ENCODE measurements at regions of chr12 and their contacts with region 1.

Region 1: DNA sequence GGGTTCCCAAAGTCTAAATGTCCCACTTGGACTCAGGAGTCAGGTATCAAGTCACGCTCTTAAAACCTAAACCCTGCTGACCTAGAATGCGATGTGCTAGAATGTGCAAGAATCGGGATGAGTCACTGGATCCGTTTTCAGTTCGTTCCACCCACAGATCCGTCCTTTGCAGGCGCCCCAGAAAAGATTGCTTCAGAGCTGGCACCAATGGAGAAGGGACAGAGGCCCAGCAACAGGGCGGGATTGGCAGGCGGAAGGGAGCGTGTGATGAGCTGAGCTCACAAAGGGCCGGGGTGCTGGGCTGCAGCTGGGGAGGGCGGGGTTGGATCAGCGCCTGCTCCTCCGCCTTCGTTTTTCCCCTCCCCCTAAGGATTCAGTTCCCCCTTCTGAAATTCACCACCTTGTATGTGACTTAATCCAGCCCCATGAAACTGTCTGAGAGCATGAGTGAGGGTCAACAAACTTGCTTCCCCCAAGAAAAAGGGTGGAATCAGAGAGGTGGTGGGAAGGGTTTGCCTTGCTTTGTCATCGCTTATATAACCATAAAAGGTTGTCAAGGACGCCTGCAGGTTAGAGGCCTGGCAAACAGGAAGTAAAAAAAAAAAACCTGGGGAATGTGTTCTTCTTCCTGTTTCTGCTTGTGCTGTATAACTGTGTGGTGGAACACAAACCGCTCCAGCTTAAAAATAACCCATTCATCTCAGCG is 2.8 kb upstream of the UBC start:
- DNase-seq: peak; percentile 86 to 97
- H3K4me3 ChIP-seq: peak overlapping the region; percentile 19 to 99 (median 36); a peak in 6 of 8 replicates
- H3K27ac ChIP-seq: peak overlapping the region; percentile 92
- H3K4me1 ChIP-seq: peaks cover 8 to 34% (median 24%) of the 10 kb centered on the region in 4 experiments; a peak in 6 of 7 replicates
- H3K27me3 ChIP-seq: no peaks in the 10 kb centered on the region
- CTCF ChIP-seq: no peak
- EP300 ChIP-seq: peak in 1 of 2 experiments; percentile 90; a peak in 2 of 3 replicates
- POLR2A ChIP-seq: peak in 1 of 2 experiments; percentile 67; a peak in 2 of 3 replicates
- RAD21 ChIP-seq: peak in 1 of 2 experiments; percentile 10; a peak in 1 of 4 replicates

Region 2: GRCh38 chr12:124869034-124869665 is 48.1 kb before region 1 on chr12:
- CTCF ChIA-PET with region 1: no interaction called
- POLR2A ChIA-PET with region 1: interaction called, 10 read pairs
- DNase-seq: no peak
- H3K4me3 ChIP-seq: no peak overlapping the region
- H3K27ac ChIP-seq: 0 out of 2 replicates have a peak overlapping the region, but pooled peaks have one; percentile 7
- H3K4me1 ChIP-seq: peaks cover 0 to 8% (median 6%) of the 10 kb centered on the region in 4 experiments; a peak in 6 of 7 replicates
- H3K27me3 ChIP-seq: no peaks in the 10 kb centered on the region
- CTCF ChIP-seq: no peak
- EP300 ChIP-seq: no peak
- POLR2A ChIP-seq: no peak
- RAD21 ChIP-seq: no peak

Region 3: DNA sequence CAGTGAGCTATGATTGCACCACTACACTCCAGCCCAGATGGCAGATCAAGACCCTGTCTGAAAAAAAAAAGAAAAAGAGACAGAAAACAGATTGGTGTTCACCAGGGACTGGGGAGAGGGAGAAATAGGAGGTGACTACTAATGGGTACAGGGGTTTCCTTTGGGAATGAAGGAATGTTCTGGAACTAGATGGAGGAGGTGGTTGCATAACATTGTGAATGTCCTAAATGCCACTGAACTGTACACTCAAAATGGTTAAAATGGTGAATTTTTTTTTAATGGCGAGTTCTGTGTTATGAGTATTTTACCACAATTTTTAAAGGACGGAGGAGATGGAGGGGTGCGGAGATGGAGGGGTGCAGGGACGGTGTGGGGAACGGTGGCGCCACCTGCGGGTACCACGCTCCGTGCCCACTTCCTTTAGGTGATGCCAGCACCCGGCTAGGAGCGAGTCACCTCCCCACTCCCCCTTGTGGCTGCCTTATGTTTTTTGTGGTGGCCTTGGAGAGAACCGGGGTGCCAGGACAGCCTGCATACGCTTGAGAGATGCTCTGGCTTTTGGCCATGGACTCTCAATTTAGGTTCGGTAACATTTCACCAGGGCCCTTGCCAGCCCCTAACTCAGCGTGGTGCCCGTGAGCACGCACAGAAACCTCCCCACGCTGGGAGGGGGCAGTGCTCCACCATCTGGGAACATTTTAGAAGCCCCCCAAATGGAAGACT is 18.9 kb before region 1 on chr12:
- CTCF ChIA-PET with region 1: interaction called, 5 read pairs
- POLR2A ChIA-PET with region 1: interaction called, 34 read pairs
- DNase-seq: peak; percentile 53 to 87
- H3K4me3 ChIP-seq: no peak overlapping the region
- H3K27ac ChIP-seq: no peak overlapping the region
- H3K4me1 ChIP-seq: no peaks in the 10 kb centered on the region; a peak in 1 of 7 replicates
- H3K27me3 ChIP-seq: no peaks in the 10 kb centered on the region
- CTCF ChIP-seq: peak; percentile 95 to 99 (median 97)
- EP300 ChIP-seq: no peak
- POLR2A ChIP-seq: no peak
- RAD21 ChIP-seq: peak; percentile 81 to 84

Region 4: DNA sequence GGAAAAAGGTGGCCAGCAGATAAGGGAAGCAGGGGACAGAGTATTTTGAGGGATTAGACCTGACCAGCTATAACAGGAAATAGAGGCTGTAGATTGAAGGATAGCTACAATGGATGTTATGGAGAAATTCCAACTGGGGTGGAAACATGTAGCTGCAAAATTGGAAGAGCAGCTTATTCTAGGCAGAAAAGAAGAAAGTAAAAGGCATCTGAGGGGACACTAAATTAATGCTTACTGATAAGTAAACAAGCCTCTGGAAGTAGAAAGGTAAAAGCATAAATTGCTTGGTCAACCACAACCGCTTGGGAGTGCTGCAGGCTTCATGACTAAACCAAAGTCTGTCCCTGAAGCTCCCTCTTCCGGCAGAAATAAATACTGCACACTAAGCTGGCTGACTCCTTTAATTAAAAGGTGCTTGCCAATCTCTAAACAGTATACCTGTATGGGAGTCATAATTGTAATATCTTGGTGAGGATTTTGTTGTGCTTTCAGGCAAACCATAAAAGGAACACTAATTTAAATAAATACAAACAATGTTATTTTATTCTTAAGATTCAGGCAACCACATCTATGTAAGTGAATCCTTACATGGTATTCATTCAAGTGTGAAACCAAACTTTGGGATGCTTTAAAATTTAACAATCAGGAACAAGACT is 10.6 kb before region 1 on chr12:
- CTCF ChIA-PET with region 1: interaction called, 41 read pairs
- POLR2A ChIA-PET with region 1: interaction called, 36 read pairs
- DNase-seq: peak in 1 of 2 experiments; percentile 92
- H3K4me3 ChIP-seq: no peak overlapping the region
- H3K27ac ChIP-seq: no peak overlapping the region
- H3K4me1 ChIP-seq: peaks cover 0 to 6% (median 1%) of the 10 kb centered on the region in 4 experiments; a peak in 4 of 7 replicates
- H3K27me3 ChIP-seq: no peaks in the 10 kb centered on the region
- CTCF ChIP-seq: peak; percentile 62 to 100 (median 97)
- EP300 ChIP-seq: no peak
- POLR2A ChIP-seq: no peak
- RAD21 ChIP-seq: peak; percentile 85 to 92

Region 5: GRCh38 chr12:124927201-124928094 is 10.2 kb after region 1 on chr12:
- CTCF ChIA-PET with region 1: interaction called, 4 read pairs
- POLR2A ChIA-PET with region 1: interaction called, 250 read pairs
- DNase-seq: peak in 1 of 2 experiments; percentile 99
- H3K4me3 ChIP-seq: peak overlapping the region; percentile 82 to 99 (median 98)
- H3K27ac ChIP-seq: peak overlapping the region; percentile 72; the same call in 1 of the 2 replicates
- H3K4me1 ChIP-seq: peaks cover 0 to 9% (median 1%) of the 10 kb centered on the region in 4 experiments; a peak in 4 of 7 replicates
- H3K27me3 ChIP-seq: no peaks in the 10 kb centered on the region
- CTCF ChIP-seq: peak in 1 of 3 experiments; percentile 6; a peak in 1 of 4 replicates
- EP300 ChIP-seq: no peak
- POLR2A ChIP-seq: no peak
- RAD21 ChIP-seq: 0 out of 4 replicates have a peak, but pooled peaks of 1 of the 2 experiments have one; percentile 3

Region 6: DNA sequence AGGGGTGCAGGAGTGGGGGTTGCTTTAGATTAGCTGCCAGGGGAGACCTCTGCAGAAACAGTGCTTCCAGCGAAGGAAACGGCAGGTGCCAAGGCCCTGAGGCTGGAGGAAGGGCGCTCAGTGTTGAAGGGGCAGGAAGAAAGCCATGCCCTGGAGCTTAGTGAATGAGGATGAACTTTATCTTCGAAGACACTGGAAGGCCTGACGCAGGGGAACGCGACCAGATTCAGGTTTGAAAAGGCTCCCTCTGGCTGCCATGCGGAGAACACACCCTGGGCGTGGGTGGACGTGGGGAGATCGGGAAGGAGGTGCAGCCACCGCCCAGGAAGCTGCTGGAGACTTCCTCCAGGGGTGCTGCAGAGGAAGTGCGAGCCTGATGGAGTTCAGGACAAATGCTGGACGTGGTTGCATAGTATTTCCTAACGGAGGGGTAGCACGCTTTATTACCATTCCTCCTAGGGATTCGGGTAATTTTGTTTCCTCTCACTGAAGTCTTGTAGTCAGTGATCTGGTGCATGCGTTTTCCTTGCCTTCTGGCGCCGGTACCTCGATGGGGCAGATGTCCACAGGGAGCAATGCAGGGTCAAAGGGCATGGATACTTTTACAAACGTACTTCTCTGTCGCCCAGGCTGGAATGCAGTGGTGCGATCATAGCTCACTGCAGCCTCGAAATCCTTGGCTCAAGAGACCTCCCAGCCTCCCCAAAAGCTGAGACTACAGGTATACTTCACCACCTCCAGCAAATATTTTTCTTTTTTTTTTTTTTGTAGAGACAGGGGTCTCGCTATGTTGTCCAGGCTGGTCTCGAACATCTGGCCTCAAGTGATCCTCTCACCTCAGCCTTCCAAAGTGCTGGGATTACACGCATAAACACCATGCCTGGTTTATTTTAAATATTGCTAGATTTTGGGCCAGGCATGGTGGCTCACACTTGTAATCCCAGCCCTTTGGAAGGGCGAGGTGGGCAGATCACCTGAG is 23.6 kb after region 1 on chr12:
- CTCF ChIA-PET with region 1: interaction called, 86 read pairs
- POLR2A ChIA-PET with region 1: interaction called, 250 read pairs
- DNase-seq: peak; percentile 85 to 88
- H3K4me3 ChIP-seq: peak overlapping the region; percentile 64 to 83 (median 72); a peak in 6 of 8 replicates
- H3K27ac ChIP-seq: no peak overlapping the region
- H3K4me1 ChIP-seq: peaks cover 0 to 4% (median 2%) of the 10 kb centered on the region in 4 experiments; a peak in 2 of 7 replicates
- H3K27me3 ChIP-seq: no peaks in the 10 kb centered on the region
- CTCF ChIP-seq: peak; percentile 85 to 97 (median 87)
- EP300 ChIP-seq: no peak
- POLR2A ChIP-seq: 0 out of 3 replicates have a peak, but pooled peaks of 1 of the 2 experiments have one; percentile 10
- RAD21 ChIP-seq: peak; percentile 45 to 52